Activated CD4-positive, alpha-beta T cell treated with anti-CD3 and anti-CD28 coated beads, Interleukin-2, amount 10 ng/mL, durations not matched to agents 7 days and 5 days (primary cell): ENCODE measurements at regions of chr15 and their contacts with region 1.

Region 1: GRCh38 chr15:75727851-75728715 is 15.4 kb upstream of the CSPG4 start:
- DNase-seq: peak; percentile 75
- H3K4me3 Mint-ChIP-seq: no peak overlapping the region
- H3K27ac Mint-ChIP-seq: no peak overlapping the region
- H3K4me1 Mint-ChIP-seq: peaks cover 14% of the 10 kb centered on the region
- H3K27me3 Mint-ChIP-seq: peaks cover 8% of the 10 kb centered on the region

Region 2: GRCh38 chr15:75542386-75542797 is 185.7 kb before region 1 on chr15:
- CTCF ChIA-PET with region 1: no interaction called
- POLR2A ChIA-PET with region 1: no interaction called
- DNase-seq: no peak
- H3K4me3 Mint-ChIP-seq: no peak overlapping the region
- H3K27ac Mint-ChIP-seq: no peak overlapping the region
- H3K4me1 Mint-ChIP-seq: peaks cover 12% of the 10 kb centered on the region
- H3K27me3 Mint-ChIP-seq: no peaks in the 10 kb centered on the region

Region 3: GRCh38 chr15:75661091-75661777 is 66.8 kb before region 1 on chr15:
- CTCF ChIA-PET with region 1: no interaction called
- POLR2A ChIA-PET with region 1: no interaction called
- DNase-seq: no peak
- H3K4me3 Mint-ChIP-seq: no peak overlapping the region
- H3K27ac Mint-ChIP-seq: no peak overlapping the region
- H3K4me1 Mint-ChIP-seq: peaks cover 4% of the 10 kb centered on the region
- H3K27me3 Mint-ChIP-seq: no peaks in the 10 kb centered on the region

Region 4: GRCh38 chr15:75801859-75802593 is 73.9 kb after region 1 on chr15:
- CTCF ChIA-PET with region 1: interaction called, 21 read pairs
- POLR2A ChIA-PET with region 1: no interaction called
- DNase-seq: peak; percentile 82
- H3K4me3 Mint-ChIP-seq: peak overlapping the region; percentile 46
- H3K27ac Mint-ChIP-seq: no peak overlapping the region
- H3K4me1 Mint-ChIP-seq: peaks cover 10% of the 10 kb centered on the region
- H3K27me3 Mint-ChIP-seq: peaks cover 59% of the 10 kb centered on the region